Activated CD8-positive, alpha-beta T cell treated with anti-CD3 and anti-CD28 coated beads for 36 hours (primary cell): ENCODE measurements at regions of chr3 and their contacts with region 1.

Region 1: DNA sequence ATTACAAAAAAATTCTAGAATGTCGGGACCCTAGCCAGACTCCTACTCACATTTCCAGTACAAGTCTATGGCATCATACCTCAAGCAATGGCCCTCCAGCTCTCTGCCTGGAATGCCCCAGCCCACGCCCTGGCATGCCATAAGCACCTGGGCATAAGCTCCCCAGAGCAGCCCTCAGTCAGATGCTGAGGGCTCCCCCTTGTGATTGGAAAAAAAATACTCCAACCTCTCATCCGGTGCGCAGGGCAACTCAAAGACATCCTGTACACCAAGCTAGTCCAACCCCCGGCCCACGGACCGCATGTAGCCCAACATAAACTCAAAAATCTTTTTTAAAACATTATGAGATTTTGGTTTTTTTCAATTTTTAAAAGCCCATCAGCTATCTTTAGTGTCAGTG is 115.4 kb downstream of the NEK10 start:
- DNase-seq: peak; percentile 32
- ATAC-seq: peak; percentile 69
- H3K4me3 Mint-ChIP-seq: no peak overlapping the region
- H3K27ac Mint-ChIP-seq: no peak overlapping the region
- H3K4me1 Mint-ChIP-seq: no peaks in the 10 kb centered on the region
- H3K27me3 Mint-ChIP-seq: peaks cover 14% of the 10 kb centered on the region
- CTCF ChIP-seq: no peak

Region 2: GRCh38 chr3:27134165-27134796 is 119.5 kb before region 1 on chr3:
- CTCF ChIA-PET with region 1: interaction called, 40 read pairs
- POLR2A ChIA-PET with region 1: no interaction called
- intact Hi-C with region 1: no loop called
- DNase-seq: peak; percentile 71
- ATAC-seq: peak; percentile 91
- H3K4me3 Mint-ChIP-seq: no peak overlapping the region
- H3K27ac Mint-ChIP-seq: no peak overlapping the region
- H3K4me1 Mint-ChIP-seq: no peaks in the 10 kb centered on the region
- H3K27me3 Mint-ChIP-seq: no peaks in the 10 kb centered on the region
- CTCF ChIP-seq: peak; percentile 90